ENCODE measurements at regions of chr10 and their contacts with region 1.

Region 1: GRCh38 chr10:55263327-55263726 is 462.3 kb upstream of the PCDH15 start:
- DNase-seq: no peak
- H3K4me3 ChIP-seq: no peak overlapping the region
- H3K27ac ChIP-seq: no peak overlapping the region
- H3K4me1 ChIP-seq: no peaks in the 10 kb centered on the region
- CTCF ChIP-seq: no peak

Region 2: GRCh38 chr10:53601260-53601875 is 1662.0 kb before region 1 on chr10:
- CTCF ChIA-PET with region 1: no interaction called
- POLR2A ChIA-PET with region 1: no interaction called
- intact Hi-C with region 1: loop called (anchors 10 kb)
- DNase-seq: peak; percentile 60
- H3K4me3 ChIP-seq: no peak overlapping the region
- H3K27ac ChIP-seq: no peak overlapping the region
- H3K4me1 ChIP-seq: no peaks in the 10 kb centered on the region
- CTCF ChIP-seq: peak; percentile 98

Region 3: DNA sequence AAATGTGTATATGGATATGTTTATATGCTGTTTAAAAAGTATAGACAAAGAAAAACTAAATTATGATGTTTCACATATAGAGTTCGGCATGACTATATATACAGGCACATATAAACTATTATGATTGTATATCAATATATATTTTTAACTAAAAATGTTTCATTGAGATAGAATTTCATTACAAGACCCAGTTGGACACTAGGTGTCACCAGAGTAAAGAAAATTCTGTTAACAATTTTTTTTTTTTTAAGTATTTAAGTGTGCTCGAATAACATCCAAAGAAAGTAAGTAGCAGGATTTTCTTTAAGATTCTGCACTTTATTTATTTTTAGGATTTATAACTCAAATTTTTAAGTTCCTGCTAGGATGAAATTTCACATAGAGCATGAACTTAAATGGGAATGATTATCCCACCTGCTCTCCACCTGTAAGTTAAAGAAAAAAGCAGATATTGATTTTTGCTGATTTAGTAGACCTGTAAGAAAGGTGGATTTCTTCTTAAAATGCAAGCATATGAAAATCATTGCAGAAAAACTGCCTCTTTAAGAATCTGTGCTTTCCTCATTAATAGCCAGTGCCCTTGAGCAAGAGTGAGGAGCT is 1423.8 kb before region 1 on chr10:
- CTCF ChIA-PET with region 1: no interaction called
- POLR2A ChIA-PET with region 1: no interaction called
- intact Hi-C with region 1: loop called (anchors 10 kb)
- DNase-seq: peak; percentile 4
- H3K4me3 ChIP-seq: no peak overlapping the region
- H3K27ac ChIP-seq: no peak overlapping the region
- H3K4me1 ChIP-seq: no peaks in the 10 kb centered on the region
- CTCF ChIP-seq: peak; percentile 77

Region 4: GRCh38 chr10:54985732-54986131 is 277.6 kb before region 1 on chr10:
- CTCF ChIA-PET with region 1: no interaction called
- POLR2A ChIA-PET with region 1: interaction called, 3 read pairs
- intact Hi-C with region 1: loop called (anchors 10 kb)
- DNase-seq: peak; percentile 32
- H3K4me3 ChIP-seq: no peak overlapping the region
- H3K27ac ChIP-seq: no peak overlapping the region
- H3K4me1 ChIP-seq: no peaks in the 10 kb centered on the region
- CTCF ChIP-seq: peak; percentile 77

Region 5: DNA sequence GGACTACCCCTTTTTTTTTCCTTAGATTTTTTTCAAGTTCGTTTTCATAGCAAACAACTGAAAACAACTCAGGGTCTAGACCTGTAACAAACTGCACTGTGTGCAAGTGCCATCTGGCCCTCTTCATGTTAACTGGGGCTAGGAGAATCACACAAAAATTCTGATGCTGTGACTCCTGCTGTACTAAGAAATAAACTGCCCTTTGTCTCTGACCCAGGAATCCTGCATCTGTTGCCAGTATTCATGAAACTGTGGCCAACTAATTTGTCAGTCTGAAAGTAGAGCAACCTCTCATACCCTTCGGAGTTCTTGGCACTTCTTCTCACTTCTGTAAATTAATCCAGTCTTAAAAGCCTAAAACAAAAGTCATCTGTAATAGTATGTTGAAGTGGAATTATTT is 243.9 kb before region 1 on chr10:
- CTCF ChIA-PET with region 1: no interaction called
- POLR2A ChIA-PET with region 1: no interaction called
- intact Hi-C with region 1: no loop called
- DNase-seq: no peak
- H3K4me3 ChIP-seq: no peak overlapping the region
- H3K27ac ChIP-seq: no peak overlapping the region
- H3K4me1 ChIP-seq: no peaks in the 10 kb centered on the region
- CTCF ChIP-seq: no peak

Region 6: GRCh38 chr10:55091691-55092328 is 171.5 kb before region 1 on chr10:
- CTCF ChIA-PET with region 1: no interaction called
- POLR2A ChIA-PET with region 1: no interaction called
- intact Hi-C with region 1: loop called (anchors 5 kb)
- DNase-seq: peak; percentile 16
- H3K4me3 ChIP-seq: no peak overlapping the region
- H3K27ac ChIP-seq: no peak overlapping the region
- H3K4me1 ChIP-seq: no peaks in the 10 kb centered on the region
- CTCF ChIP-seq: peak; percentile 96